SK-N-SH (cell line): ENCODE measurements at regions of chr19 and their contacts with region 1.

Region 1: DNA sequence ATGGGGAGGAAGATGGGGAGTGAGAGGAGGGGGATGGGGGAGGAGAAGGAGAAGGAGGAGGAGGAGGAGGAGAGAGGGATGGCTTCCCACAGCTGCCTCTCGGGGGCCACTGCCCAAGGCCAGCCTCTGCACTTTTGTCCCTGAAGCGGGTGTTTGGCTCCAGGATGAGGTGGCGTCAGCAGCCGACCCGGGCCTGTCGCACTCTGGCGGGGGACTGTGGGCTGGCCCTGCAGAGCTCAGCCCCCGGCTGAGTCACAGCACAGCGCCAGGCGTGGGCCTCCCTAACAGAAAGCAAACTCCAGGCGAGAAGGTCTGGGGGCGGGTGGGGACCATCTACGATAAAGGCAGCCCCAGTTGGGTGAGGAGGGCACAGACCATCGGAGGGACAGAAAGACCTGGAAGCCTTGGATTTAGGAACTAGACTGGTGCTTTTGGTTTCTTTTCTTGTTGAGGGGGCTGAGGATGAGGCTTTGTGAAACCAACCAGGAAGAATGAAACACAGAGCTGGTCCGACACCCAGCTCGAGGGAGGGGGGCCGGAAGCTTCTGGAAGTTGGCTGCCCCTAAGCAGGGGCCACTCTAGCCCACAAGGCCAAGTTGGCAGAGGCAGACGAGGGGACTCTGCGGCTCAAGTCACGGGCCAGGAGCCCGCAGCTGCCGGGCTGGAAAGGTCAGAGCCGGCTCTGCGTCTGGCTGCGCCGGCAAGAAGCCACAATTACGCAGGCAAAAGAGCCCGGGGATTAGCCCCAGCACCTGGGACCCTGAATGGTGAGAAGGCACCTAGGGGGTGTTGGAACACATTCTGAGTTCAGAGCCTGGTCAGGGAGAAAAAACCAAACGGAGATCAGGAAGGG is 18.2 kb downstream of the LSM4 start:
- DNase-seq: peak; percentile 92
- H3K4me3 ChIP-seq: peak overlapping the region; percentile 19 to 60
- H3K27ac ChIP-seq: peak overlapping the region; percentile 97 to 98
- H3K4me1 ChIP-seq: peaks cover 23% of the 10 kb centered on the region in 2 experiments; a peak in 3 of 4 replicates
- H3K27me3 ChIP-seq: no peaks in the 10 kb centered on the region
- CTCF ChIP-seq: no peak
- EP300 ChIP-seq: no peak
- RAD21 ChIP-seq: 0 out of 2 replicates have a peak, but pooled peaks have one; percentile 9

Region 2: GRCh38 chr19:17966550-17967256 is 338.0 kb before region 1 on chr19 and contains the start of gene KCNN1:
- CTCF ChIA-PET with region 1: no interaction called
- POLR2A ChIA-PET with region 1: no interaction called
- DNase-seq: peak; percentile 98
- H3K4me3 ChIP-seq: peak within 1 kb of the TSS; percentile 67 to 68
- H3K27ac ChIP-seq: no peak within 1 kb of the TSS
- H3K4me1 ChIP-seq: peaks cover 0 to 13% of the 10 kb centered on the region in 2 experiments; a peak in 2 of 4 replicates
- H3K27me3 ChIP-seq: 0 out of 2 replicates have a peak, but pooled peaks cover 4% of the 10 kb centered on the region
- CTCF ChIP-seq: no peak
- EP300 ChIP-seq: no peak
- RAD21 ChIP-seq: no peak
- polyA plus RNA-seq, gene KCNN1: 2.7 and 3.6 TPM in 2 replicates

Region 3: DNA sequence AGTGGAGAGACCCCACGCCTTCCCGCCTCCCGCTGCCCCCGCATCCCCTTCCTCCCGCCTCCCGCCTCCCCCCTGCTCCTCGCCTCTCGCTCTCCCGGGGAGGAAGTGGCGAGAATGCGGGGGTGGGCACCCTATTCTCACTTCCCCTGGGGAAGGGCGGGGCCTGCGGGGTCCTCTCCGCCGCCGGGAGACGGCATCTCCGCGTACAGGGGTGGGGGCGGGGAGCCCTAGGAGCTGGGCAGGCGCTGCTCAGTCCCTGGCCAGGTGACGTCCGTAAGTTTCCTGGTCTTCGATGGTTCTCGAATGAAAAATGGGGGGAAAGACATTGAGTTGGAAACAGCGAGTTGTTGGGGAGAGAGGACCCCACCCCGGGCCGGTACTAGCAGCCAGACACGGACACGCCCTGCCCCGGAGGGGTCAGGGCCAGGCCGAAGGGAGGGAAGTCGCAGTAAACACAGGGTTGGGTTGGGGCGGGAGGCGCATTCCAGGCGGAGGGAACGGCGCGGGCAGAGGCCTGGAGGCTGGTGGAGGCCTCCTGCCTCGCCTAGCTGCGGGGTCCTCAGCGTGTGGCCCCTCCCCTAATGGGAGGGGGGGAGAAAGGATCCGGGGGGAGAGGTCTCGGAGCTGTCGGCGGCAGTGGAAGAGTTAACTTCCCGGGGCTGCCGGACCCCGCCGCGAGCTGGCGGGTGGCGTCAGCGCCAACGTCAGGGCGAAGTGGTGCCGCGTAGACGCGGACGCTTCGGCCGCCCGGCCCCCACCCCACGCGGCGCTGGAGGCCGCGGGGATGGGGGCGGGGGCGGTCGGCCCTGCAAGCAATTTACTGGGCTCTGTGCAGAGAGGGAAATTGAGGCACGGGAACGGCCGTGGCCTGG is 12.9 kb before region 1 on chr19:
- CTCF ChIA-PET with region 1: interaction called, 5 read pairs
- POLR2A ChIA-PET with region 1: interaction called, 24 read pairs
- DNase-seq: peak; percentile 89
- H3K4me3 ChIP-seq: peak overlapping the region; percentile 58 to 71
- H3K27ac ChIP-seq: peak overlapping the region; percentile 72 to 94
- H3K4me1 ChIP-seq: peaks cover 8 to 22% of the 10 kb centered on the region in 2 experiments; a peak in 2 of 4 replicates
- H3K27me3 ChIP-seq: no peaks in the 10 kb centered on the region
- CTCF ChIP-seq: no peak
- EP300 ChIP-seq: peak; percentile 16 to 22; a peak in 2 of 4 replicates
- RAD21 ChIP-seq: no peak

Region 4: DNA sequence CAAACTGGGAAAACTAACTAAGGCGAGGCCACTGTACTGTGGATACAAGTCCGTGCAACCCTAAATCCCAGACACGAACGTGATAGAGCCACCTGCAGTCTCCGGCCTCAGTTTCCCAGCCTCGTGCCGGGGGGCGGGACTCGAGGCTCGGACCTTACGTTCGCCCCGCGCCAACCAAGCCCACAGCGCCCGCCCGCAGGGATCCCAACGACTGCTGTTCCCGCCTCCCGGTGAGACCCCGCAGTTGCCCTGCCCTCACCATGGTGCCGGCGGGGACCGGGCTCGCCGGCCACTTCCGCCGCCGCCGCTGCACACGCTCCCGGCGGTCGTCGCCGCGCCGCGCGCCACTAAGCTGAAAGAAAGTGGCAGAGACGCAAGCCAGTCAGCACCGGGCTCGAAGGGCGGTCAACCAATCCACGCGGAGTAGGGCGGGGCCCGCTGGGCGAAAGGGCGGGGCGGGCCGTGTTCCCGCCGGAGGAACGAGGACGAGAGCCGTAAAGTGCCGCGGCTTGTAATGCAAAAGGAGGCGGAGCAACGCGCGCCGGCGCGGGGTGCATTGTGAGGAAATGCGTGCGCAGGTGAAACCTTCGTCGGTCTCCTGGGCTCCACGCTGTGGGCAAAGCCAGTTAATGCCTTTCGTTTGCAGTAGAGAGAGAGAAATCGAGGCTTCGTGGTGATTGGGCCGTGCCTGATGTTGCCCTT is 18.2 kb after region 1 on chr19 and contains the start of gene LSM4:
- CTCF ChIA-PET with region 1: interaction called, 9 read pairs
- POLR2A ChIA-PET with region 1: interaction called, 19 read pairs
- DNase-seq: peak; percentile 97
- H3K4me3 ChIP-seq: peak within 1 kb of the TSS; percentile 72 to 89
- H3K27ac ChIP-seq: peak within 1 kb of the TSS; percentile 88 to 93
- H3K4me1 ChIP-seq: peaks cover 19 to 30% of the 10 kb centered on the region in 2 experiments; a peak in 3 of 4 replicates
- H3K27me3 ChIP-seq: no peaks in the 10 kb centered on the region
- CTCF ChIP-seq: peak; percentile 22
- EP300 ChIP-seq: no peak; a peak in 1 of 4 replicates
- RAD21 ChIP-seq: peak; percentile 55
- polyA plus RNA-seq, gene LSM4: 235 and 277 TPM in 2 replicates

Region 5: DNA sequence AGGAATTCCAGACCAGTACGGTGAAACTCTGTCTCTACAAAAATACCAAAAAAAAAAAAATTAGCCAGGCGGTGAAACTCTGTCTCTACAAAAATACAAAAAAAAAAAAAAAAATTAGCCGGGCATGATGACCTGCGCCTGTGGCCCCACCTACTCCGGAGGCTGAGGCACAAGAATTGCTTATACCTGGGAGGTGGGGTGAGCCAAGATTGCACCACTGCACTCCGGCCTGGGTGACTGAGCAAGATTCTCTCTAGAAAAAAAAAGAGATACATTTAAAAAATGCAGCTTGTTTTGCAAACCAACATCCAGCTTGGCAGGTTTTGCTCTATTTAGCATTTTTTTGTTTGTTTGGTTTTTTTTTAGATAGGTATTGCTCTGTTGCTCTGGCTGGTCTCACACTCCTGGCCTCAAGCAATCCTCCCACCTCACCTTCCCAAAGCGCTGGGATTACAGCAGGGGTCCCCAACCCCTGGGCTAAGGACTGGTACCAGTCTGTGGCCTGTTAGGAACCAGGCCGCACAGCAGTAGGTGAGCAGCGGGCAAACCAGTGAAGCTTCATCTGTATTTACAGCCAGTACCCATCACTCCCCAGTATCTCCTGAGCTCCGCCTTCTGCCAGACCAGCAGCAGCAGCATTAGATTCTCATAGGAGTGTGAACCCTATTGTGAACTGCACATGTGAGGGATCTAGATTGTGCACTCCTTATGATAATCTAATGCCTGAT is 29.1 kb after region 1 on chr19:
- CTCF ChIA-PET with region 1: no interaction called
- POLR2A ChIA-PET with region 1: no interaction called
- DNase-seq: no peak
- H3K4me3 ChIP-seq: no peak overlapping the region
- H3K27ac ChIP-seq: no peak overlapping the region
- H3K4me1 ChIP-seq: peaks cover 5 to 6% of the 10 kb centered on the region in 2 experiments; a peak in 2 of 4 replicates
- H3K27me3 ChIP-seq: no peaks in the 10 kb centered on the region
- CTCF ChIP-seq: no peak
- EP300 ChIP-seq: no peak
- RAD21 ChIP-seq: no peak